PC-9 (cell line): ENCODE measurements at regions of chr14 and their contacts with region 1.

Region 1: GRCh38 chr14:23034483-23035302 is at the start of gene PSMB5:
- DNase-seq: peak; percentile 74 to 85
- H3K4me3 ChIP-seq: peak within 1 kb of the TSS; percentile 88
- H3K27ac ChIP-seq: peak within 1 kb of the TSS; percentile 96
- H3K4me1 ChIP-seq: peaks cover 9% of the 10 kb centered on the region
- H3K27me3 ChIP-seq: no peaks in the 10 kb centered on the region
- CTCF ChIP-seq: no peak
- total RNA-seq, gene PSMB5: 122 and 146 TPM in 2 replicates

Region 2: GRCh38 chr14:22994762-22995275 is 39.9 kb before region 1 on chr14:
- CTCF ChIA-PET with region 1: interaction called, 11 read pairs
- POLR2A ChIA-PET with region 1: no interaction called
- intact Hi-C with region 1: no loop called
- DNase-seq: no peak
- H3K4me3 ChIP-seq: no peak overlapping the region
- H3K27ac ChIP-seq: no peak overlapping the region
- H3K4me1 ChIP-seq: no peaks in the 10 kb centered on the region
- H3K27me3 ChIP-seq: no peaks in the 10 kb centered on the region
- CTCF ChIP-seq: no peak